SK-N-SH (cell line): ENCODE measurements at regions of chr19 and their contacts with region 1.

Region 1: GRCh38 chr19:45059278-45059965 is 16.9 kb downstream of the ZNF296 start:
- DNase-seq: peak; percentile 87
- H3K4me3 ChIP-seq: no peak overlapping the region; a peak in 1 of 4 replicates
- H3K27ac ChIP-seq: no peak overlapping the region
- H3K4me1 ChIP-seq: no peaks in the 10 kb centered on the region
- H3K27me3 ChIP-seq: no peaks in the 10 kb centered on the region
- CTCF ChIP-seq: peak; percentile 93
- EP300 ChIP-seq: no peak
- RAD21 ChIP-seq: peak; percentile 67

Region 2: GRCh38 chr19:44890366-44891015 is 168.9 kb before region 1 on chr19:
- CTCF ChIA-PET with region 1: no interaction called
- POLR2A ChIA-PET with region 1: no interaction called
- DNase-seq: peak; percentile 90
- H3K4me3 ChIP-seq: peak overlapping the region; percentile 51 to 57
- H3K27ac ChIP-seq: peak overlapping the region; percentile 92 to 93
- H3K4me1 ChIP-seq: peaks cover 8 to 21% of the 10 kb centered on the region in 2 experiments; a peak in 2 of 4 replicates
- H3K27me3 ChIP-seq: no peaks in the 10 kb centered on the region
- CTCF ChIP-seq: no peak
- EP300 ChIP-seq: peak; percentile 10 to 28; a peak in 1 of 4 replicates
- RAD21 ChIP-seq: peak; percentile 27

Region 3: GRCh38 chr19:45047188-45047797 is 12.1 kb before region 1 on chr19:
- CTCF ChIA-PET with region 1: interaction called, 19 read pairs
- POLR2A ChIA-PET with region 1: no interaction called
- DNase-seq: no peak
- H3K4me3 ChIP-seq: no peak overlapping the region
- H3K27ac ChIP-seq: no peak overlapping the region
- H3K4me1 ChIP-seq: no peaks in the 10 kb centered on the region; a peak in 1 of 4 replicates
- H3K27me3 ChIP-seq: no peaks in the 10 kb centered on the region
- CTCF ChIP-seq: no peak
- EP300 ChIP-seq: no peak
- RAD21 ChIP-seq: no peak